CD4-positive, alpha-beta memory T cell (primary cell): ENCODE measurements at regions of chr11 and their contacts with region 1.

Region 1: DNA sequence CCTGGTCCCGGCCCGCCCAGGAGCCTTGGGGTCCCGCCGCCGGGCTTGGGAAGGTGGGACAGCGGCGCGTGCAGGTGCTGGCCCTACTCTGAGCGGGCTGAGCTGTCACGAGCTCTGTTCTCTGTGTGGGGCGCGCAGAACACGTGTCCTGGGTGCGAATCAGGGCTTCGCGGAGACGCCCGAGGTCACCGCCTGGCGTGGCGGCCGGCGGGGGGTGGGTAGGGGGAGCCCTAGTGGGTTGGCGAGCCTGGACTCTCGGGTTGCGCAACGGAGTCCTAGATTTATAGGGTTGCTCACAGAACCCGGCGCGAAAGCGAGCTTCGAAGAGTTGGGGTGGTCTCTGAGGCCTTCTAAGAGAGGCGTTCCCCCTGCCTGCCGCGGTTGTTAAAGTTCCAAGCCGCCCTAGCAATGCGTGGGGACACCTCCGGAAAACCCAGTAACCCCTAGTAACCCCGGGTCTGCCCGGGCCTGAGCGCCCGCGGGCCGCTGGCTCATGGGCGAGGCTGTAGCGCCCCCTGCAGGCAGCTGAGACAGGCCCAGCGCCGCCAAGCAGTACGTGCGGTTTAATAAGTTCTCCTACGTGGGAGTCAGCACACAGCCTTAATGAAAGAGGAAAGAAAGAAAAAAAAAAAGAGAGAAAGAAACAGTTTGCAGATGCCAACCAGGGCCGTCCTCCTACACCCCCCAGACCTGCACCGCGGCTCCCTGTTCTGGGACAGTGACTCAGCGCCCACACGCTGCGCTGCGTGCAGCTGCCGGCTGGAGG is 2.8 kb downstream of the ADM start:
- DNase-seq: peak; percentile 81 to 86 (median 84)
- H3K4me3 ChIP-seq: peak overlapping the region; percentile 54 to 73
- H3K4me3 Mint-ChIP-seq: peak overlapping the region; percentile 69 to 98 (median 78)
- H3K27ac ChIP-seq: peak overlapping the region; percentile 28
- H3K27ac Mint-ChIP-seq: peak overlapping the region in 6 of 7 donors; percentile 7 to 88 (median 59)
- H3K4me1 ChIP-seq: peaks cover 52% of the 10 kb centered on the region
- H3K4me1 Mint-ChIP-seq: peaks cover 22 to 48% (median 35%) of the 10 kb centered on the region in 4 donors
- H3K27me3 ChIP-seq: peaks cover 19% of the 10 kb centered on the region
- H3K27me3 Mint-ChIP-seq: peaks cover 14 to 21% of the 10 kb centered on the region in 2 donors

Region 2: GRCh38 chr11:8682303-8683114 is 1625.1 kb before region 1 on chr11 and contains the starts of genes RPL27A and TRIM66:
- CTCF ChIA-PET with region 1: no interaction called
- POLR2A ChIA-PET with region 1: no interaction called
- intact Hi-C with region 1: loop called (anchors 5 kb)
- DNase-seq: peak; percentile 98 to 99 (median 98)
- H3K4me3 ChIP-seq: peak within 1 kb of the TSS; percentile 61 to 87
- H3K4me3 Mint-ChIP-seq: peak within 1 kb of the TSS; percentile 89 to 99 (median 96)
- H3K27ac ChIP-seq: peak within 1 kb of the TSS; percentile 96
- H3K27ac Mint-ChIP-seq: peak within 1 kb of the TSS; percentile 97 to 99 (median 98)
- H3K4me1 ChIP-seq: peaks cover 34% of the 10 kb centered on the region
- H3K4me1 Mint-ChIP-seq: peaks cover 28 to 72% (median 40%) of the 10 kb centered on the region in 4 donors
- H3K27me3 ChIP-seq: no peaks in the 10 kb centered on the region
- H3K27me3 Mint-ChIP-seq: no peaks in the 10 kb centered on the region
- total RNA-seq, gene RPL27A: 1,456 to 1,504 TPM
- total RNA-seq, gene TRIM66: 25.0 to 31.3 TPM

Region 3: GRCh38 chr11:9573052-9573774 is 734.4 kb before region 1 on chr11 and contains the start of gene WEE1:
- CTCF ChIA-PET with region 1: interaction called, 4 read pairs
- POLR2A ChIA-PET with region 1: interaction called, 11 read pairs
- intact Hi-C with region 1: loop called (anchors 1 kb)
- DNase-seq: peak; percentile 94 to 96 (median 95)
- H3K4me3 ChIP-seq: peak within 1 kb of the TSS; percentile 42 to 80
- H3K4me3 Mint-ChIP-seq: peak within 1 kb of the TSS; percentile 85 to 93 (median 89)
- H3K27ac ChIP-seq: peak within 1 kb of the TSS; percentile 86
- H3K27ac Mint-ChIP-seq: peak within 1 kb of the TSS; percentile 85 to 95 (median 92)
- H3K4me1 ChIP-seq: peaks cover 55% of the 10 kb centered on the region
- H3K4me1 Mint-ChIP-seq: peaks cover 24 to 56% (median 39%) of the 10 kb centered on the region in 4 donors
- H3K27me3 ChIP-seq: no peaks in the 10 kb centered on the region
- H3K27me3 Mint-ChIP-seq: no peaks in the 10 kb centered on the region
- total RNA-seq, gene WEE1: 11.1 to 11.7 TPM

Region 4: DNA sequence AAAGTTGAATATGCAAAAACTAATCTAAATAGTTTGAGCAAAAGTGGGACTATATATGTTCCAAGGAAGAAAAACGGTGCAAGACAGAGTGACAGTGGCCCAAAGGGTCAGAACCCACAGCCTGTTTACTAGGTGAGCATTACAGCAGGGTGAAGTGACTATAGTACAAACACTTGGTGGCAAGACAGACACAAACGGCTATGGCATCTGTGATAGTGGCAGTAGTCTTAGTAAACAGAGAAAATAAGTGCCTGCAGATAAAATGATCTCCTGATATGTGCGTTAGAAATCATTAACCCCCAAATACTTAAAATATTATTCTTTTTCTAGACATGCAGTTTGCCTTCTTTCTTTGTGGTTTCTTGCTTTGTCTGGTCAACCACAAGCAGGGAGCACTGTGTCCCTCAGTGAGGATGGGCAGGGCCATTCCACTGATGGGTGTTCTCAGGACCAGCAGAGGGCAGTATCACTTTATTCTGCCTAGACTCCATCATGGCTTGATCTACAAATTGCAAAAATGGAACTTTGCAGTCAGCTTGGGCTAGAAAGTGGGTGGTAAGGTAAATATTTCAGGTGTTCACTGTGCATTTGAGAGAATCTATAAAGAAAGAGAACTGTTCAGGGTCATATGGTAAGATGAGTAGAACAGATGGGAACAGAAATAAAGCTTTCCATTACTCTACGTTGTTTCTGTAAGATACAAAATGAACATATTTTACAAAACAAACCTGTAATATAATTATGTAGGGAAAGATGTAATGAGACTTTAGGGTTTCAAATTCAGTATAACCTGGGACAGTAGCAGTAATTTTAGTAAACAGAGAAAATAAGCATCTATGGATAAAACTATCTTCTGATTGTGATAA is 445.5 kb before region 1 on chr11:
- CTCF ChIA-PET with region 1: interaction called, 8 read pairs
- POLR2A ChIA-PET with region 1: no interaction called
- intact Hi-C with region 1: loop called (anchors 1 kb)
- DNase-seq: peak; percentile 30 to 54 (median 33)
- H3K4me3 ChIP-seq: no peak overlapping the region
- H3K4me3 Mint-ChIP-seq: no peak overlapping the region
- H3K27ac ChIP-seq: no peak overlapping the region
- H3K27ac Mint-ChIP-seq: no peak overlapping the region
- H3K4me1 ChIP-seq: peaks cover 13% of the 10 kb centered on the region
- H3K4me1 Mint-ChIP-seq: peaks cover 12 to 27% (median 17%) of the 10 kb centered on the region in 4 donors
- H3K27me3 ChIP-seq: no peaks in the 10 kb centered on the region
- H3K27me3 Mint-ChIP-seq: no peaks in the 10 kb centered on the region

Region 5: GRCh38 chr11:10208131-10208575 is 99.5 kb before region 1 on chr11:
- CTCF ChIA-PET with region 1: interaction called, 349 read pairs
- POLR2A ChIA-PET with region 1: interaction called, 8 read pairs
- intact Hi-C with region 1: loop called (anchors 1 kb)
- DNase-seq: peak in 4 of 5 donors; percentile 45 to 55 (median 48)
- H3K4me3 ChIP-seq: no peak overlapping the region
- H3K4me3 Mint-ChIP-seq: no peak overlapping the region
- H3K27ac ChIP-seq: no peak overlapping the region
- H3K27ac Mint-ChIP-seq: no peak overlapping the region
- H3K4me1 ChIP-seq: no peaks in the 10 kb centered on the region
- H3K4me1 Mint-ChIP-seq: no peaks in the 10 kb centered on the region
- H3K27me3 ChIP-seq: no peaks in the 10 kb centered on the region
- H3K27me3 Mint-ChIP-seq: no peaks in the 10 kb centered on the region

Region 6: DNA sequence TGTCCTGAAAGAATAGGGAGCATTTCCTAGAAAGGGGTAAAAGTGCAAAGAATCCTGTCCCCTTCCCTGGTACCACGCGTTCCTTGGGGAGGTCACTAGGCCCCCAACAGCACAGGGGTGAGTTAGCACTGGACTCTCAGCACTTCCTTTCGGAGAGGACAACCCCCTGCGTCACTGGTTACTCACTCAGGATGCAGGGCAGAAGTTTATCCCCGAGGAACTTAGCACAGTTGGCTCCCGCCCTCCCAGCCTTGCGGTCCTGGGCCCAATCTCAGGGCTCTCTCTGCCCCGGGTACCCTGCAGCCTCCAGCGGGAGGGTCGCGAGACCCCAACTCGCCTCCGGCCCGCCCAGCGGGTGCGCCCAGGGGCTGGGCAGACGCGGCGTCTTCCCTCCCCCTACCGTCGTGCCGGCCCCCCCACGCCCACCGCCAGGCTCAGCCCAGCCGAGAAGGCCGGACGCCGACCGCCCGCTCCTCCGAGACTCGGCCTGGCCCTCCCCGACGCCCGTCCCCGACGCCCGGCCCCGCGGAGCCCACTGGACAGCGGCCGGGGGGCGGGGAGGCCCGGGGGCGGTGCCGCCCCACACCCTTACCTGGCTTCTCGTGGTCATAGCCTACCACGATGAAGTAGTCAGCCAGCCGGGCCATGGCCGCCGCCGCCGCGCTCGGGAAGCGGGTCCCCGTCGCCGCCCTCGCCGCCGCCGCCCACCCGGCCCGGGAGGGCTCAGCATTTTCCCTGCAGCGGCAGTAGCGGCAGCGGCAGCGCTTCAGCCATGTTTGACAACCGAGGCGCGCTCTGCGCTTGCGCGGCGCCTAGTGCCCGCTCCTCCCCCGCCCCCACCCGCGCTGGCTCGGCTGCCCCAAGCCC is 14.0 kb before region 1 on chr11 and contains the start of gene SBF2:
- CTCF ChIA-PET with region 1: interaction called, 44 read pairs
- POLR2A ChIA-PET with region 1: interaction called, 39 read pairs
- intact Hi-C with region 1: loop called (anchors 1 kb)
- DNase-seq: peak; percentile 75 to 82 (median 77)
- H3K4me3 ChIP-seq: peak within 1 kb of the TSS; percentile 60 to 63
- H3K4me3 Mint-ChIP-seq: peak within 1 kb of the TSS; percentile 82 to 94 (median 89)
- H3K27ac ChIP-seq: peak within 1 kb of the TSS; percentile 38
- H3K27ac Mint-ChIP-seq: peak within 1 kb of the TSS; percentile 39 to 92 (median 80)
- H3K4me1 ChIP-seq: peaks cover 36% of the 10 kb centered on the region
- H3K4me1 Mint-ChIP-seq: peaks cover 30 to 42% (median 35%) of the 10 kb centered on the region in 4 donors
- H3K27me3 ChIP-seq: peaks cover 8% of the 10 kb centered on the region
- H3K27me3 Mint-ChIP-seq: peaks cover 8 to 20% of the 10 kb centered on the region in 2 donors
- total RNA-seq, gene SBF2: 13.8 to 15.4 TPM

Region 7: DNA sequence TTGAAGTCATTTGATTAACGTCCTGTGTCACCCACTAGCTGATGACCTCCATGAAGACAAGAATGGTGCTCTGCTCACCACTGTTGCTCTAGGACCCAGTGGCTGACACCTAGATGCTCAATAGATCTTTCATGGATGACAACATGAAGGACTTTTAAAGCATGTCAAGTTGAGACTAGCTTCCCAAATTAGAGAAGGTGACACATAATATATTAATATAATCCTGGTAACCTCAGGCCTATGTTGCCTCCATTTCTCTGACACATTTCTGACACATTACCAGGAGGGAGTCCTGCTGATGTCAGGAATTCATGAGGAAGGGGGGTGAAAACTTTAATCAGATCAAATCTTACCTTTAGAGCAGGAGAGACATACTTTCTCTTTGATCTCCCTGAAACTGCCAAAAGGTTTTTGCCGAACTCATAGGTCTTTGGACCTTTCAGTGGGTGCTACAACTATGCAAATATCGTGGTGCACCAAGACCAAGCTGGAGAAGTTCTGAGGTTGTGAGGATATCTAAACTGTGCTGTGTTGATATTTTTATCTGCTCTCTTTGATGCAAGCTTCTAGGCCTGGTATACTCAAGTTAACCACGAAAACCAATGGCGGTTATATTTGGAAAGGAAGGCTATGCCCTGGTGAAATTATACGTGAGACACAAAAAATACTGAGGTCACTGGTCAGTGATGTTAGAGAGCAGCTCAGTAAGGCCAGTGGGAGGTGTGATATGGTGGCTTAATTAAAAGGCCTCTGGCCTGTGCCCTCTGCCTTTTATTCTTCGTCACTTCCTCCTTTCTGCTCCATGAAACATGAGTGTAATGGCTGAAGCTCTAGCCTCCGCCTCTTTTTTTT is 134.3 kb after region 1 on chr11:
- CTCF ChIA-PET with region 1: no interaction called
- POLR2A ChIA-PET with region 1: no interaction called
- intact Hi-C with region 1: no loop called
- DNase-seq: peak in 3 of 5 donors; percentile 10 to 56 (median 28)
- H3K4me3 ChIP-seq: no peak overlapping the region
- H3K4me3 Mint-ChIP-seq: peak overlapping the region in 3 of 8 donors; percentile 25 to 57 (median 27)
- H3K27ac ChIP-seq: no peak overlapping the region
- H3K27ac Mint-ChIP-seq: peak overlapping the region; percentile 26 to 86 (median 73)
- H3K4me1 ChIP-seq: peaks cover 10% of the 10 kb centered on the region
- H3K4me1 Mint-ChIP-seq: peaks cover 13 to 40% (median 17%) of the 10 kb centered on the region in 4 donors
- H3K27me3 ChIP-seq: no peaks in the 10 kb centered on the region
- H3K27me3 Mint-ChIP-seq: no peaks in the 10 kb centered on the region

Region 8: GRCh38 chr11:10455637-10456487 is 148.2 kb after region 1 on chr11:
- CTCF ChIA-PET with region 1: no interaction called
- POLR2A ChIA-PET with region 1: interaction called, 8 read pairs
- intact Hi-C with region 1: loop called (anchors 10 kb)
- DNase-seq: peak; percentile 70 to 91 (median 75)
- H3K4me3 ChIP-seq: peak overlapping the region; percentile 53 to 85
- H3K4me3 Mint-ChIP-seq: peak overlapping the region; percentile 90 to 96 (median 93)
- H3K27ac ChIP-seq: peak overlapping the region; percentile 75
- H3K27ac Mint-ChIP-seq: peak overlapping the region; percentile 94 to 97 (median 95)
- H3K4me1 ChIP-seq: peaks cover 84% of the 10 kb centered on the region
- H3K4me1 Mint-ChIP-seq: peaks cover 59 to 97% (median 79%) of the 10 kb centered on the region in 4 donors
- H3K27me3 ChIP-seq: no peaks in the 10 kb centered on the region
- H3K27me3 Mint-ChIP-seq: no peaks in the 10 kb centered on the region

Region 9: DNA sequence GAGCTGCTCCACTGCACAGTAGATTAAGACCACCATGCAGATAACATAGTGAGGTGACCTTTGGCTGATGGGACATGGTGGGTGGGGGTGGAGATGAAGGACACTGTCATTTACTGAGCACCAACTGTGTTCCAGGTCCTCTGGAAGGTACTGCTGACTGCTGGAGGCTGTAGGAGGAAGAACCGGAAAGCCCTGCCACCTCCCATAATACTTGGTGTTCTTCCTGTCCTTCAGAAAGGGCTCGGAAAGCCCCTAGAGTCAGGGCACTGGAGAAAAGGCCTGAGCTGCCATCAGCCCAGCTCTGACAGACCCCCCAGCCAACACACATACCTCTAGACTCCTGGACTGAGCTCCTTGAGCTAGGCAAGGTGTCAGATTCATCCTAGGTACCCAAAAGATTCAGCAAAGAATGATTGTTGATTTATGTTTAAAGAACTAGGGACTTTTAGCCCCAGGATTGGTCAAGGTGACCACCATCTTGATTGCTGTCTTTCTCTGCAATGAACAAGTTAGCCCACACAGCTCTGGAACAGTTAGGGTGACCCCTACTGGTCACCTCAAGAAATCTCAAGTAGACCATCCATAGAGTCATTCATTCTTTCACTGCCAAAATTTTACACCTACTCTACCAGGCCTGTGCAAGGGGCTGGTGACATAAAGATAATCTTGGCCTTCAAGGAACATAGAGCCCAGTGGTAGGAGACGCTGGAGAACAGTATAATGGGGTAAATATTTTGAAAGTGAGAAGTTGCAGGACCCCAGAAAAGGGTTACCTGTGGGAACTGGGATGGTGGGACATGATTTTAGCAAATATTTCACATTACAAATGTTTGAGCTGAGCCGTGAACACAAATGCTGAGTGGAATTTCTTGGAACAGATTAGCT is 346.5 kb after region 1 on chr11:
- CTCF ChIA-PET with region 1: no interaction called
- POLR2A ChIA-PET with region 1: no interaction called
- intact Hi-C with region 1: no loop called
- DNase-seq: peak in 4 of 5 donors; percentile 47 to 53 (median 50)
- H3K4me3 ChIP-seq: no peak overlapping the region
- H3K4me3 Mint-ChIP-seq: no peak overlapping the region
- H3K27ac ChIP-seq: no peak overlapping the region
- H3K27ac Mint-ChIP-seq: peak overlapping the region in 2 of 7 donors; percentile 16 to 41
- H3K4me1 ChIP-seq: no peaks in the 10 kb centered on the region
- H3K4me1 Mint-ChIP-seq: peaks cover 0 to 2% (median under 1%) of the 10 kb centered on the region in 4 donors
- H3K27me3 ChIP-seq: no peaks in the 10 kb centered on the region
- H3K27me3 Mint-ChIP-seq: no peaks in the 10 kb centered on the region